HepG2 (cell line): ENCODE measurements at regions of chr3 and their contacts with region 1.

Region 1: DNA sequence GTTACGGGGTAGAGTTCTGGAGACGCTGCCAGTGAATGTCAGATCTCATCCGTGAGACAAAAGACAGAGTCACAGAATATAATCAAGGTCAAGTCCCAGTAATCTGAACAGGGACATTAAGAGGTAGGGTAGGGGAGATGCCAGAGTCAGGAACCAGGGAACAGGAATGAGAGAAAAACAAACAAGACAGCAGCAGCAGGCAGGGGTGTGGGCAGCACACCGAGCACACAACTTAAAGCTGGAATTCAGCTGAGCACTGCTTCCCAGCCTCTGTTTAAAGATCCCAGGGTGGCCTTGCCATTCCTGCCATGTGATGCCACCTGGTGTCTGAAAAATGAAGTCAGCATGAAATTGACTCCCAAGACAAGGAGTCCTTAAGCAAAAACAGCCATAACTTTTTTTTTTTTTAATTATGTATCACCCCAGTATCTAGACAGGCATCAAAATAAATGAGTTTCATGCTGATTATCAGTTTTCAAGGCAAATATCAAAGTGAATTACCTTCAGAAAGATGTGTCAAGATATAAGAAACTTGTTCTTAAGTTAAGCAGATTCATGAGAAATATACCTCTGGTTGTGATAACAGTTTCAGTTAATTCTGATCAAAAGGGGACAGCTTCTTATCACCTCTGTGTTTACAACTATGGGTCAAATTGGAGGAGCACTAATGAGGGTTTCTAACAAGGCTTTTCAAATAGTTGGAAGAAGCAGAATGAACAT is 203.7 kb downstream of the SLC9A9 start:
- DNase-seq: peak; percentile 22
- ATAC-seq: peak; percentile 76
- H3K4me3 ChIP-seq: no peak overlapping the region
- H3K27ac ChIP-seq: no peak overlapping the region
- H3K4me1 ChIP-seq: no peaks in the 10 kb centered on the region
- H3K27me3 ChIP-seq: no peaks in the 10 kb centered on the region; a peak in 1 of 5 replicates
- CTCF ChIP-seq: peak; percentile 52
- EP300 ChIP-seq: no peak
- POLR2A ChIP-seq: no peak
- RAD21 ChIP-seq: no peak

Region 2: DNA sequence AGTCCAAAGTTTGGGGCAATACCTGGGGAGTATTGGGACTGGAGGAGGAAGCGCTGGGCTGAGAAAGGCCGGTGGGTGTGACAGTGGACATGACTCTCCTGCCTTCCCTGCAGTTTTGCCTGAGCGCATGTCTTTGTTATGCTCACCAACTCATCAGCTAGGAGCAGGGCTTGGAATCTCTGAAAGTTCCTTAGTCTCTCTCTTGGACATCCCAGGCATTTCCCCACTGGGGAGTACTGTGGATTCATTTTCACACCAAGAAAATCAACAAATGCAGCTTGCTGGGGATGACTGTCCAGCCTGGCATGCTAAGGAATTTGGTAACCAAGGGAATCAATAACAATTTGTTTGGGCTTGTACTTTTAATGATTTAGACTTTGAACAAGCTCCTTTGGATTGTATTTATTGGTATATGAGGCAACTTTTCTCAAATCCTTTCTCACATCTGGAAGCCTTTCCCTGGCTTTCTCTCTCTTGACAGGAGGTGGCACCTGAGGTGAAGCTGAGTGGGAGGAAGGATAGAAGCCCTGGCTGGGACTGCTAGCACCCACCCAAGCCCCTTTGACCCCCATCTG is 573.5 kb before region 1 on chr3:
- CTCF ChIA-PET with region 1: no interaction called
- POLR2A ChIA-PET with region 1: no interaction called
- in situ Hi-C with region 1: no loop called
- intact Hi-C with region 1: loop called (anchors 10 kb)
- DNase-seq: peak; percentile 24
- ATAC-seq: peak; percentile 66
- H3K4me3 ChIP-seq: no peak overlapping the region
- H3K27ac ChIP-seq: no peak overlapping the region
- H3K4me1 ChIP-seq: peaks cover 10% of the 10 kb centered on the region
- H3K27me3 ChIP-seq: no peaks in the 10 kb centered on the region; a peak in 2 of 5 replicates
- CTCF ChIP-seq: no peak
- EP300 ChIP-seq: no peak
- POLR2A ChIP-seq: no peak
- RAD21 ChIP-seq: no peak

Region 3: DNA sequence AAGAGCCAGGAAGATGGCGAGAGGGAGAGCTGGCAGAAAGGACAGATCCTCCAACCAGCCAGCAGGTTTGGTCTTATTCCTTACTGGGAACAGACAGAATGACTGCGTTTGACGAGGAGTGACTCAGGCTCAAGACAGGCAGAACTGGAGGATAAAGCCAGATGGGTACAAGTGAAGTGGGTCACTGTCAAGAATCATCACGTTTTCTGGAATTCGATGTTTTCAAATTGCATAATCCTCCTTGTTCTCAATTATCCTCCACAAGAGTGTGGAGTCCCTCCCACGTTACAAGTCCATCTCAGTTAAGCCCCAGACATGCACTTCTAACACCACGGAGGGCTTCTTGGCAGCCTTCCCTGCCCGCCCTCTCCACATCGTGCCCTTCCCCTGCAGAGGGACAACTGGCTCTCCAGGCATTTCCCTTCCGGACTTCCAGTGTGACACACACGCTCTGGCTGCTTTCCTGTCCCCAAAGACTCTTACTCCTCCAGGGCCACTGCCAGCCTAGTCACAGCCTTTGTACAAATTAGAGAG is 341.8 kb before region 1 on chr3:
- CTCF ChIA-PET with region 1: no interaction called
- POLR2A ChIA-PET with region 1: no interaction called
- in situ Hi-C with region 1: no loop called
- intact Hi-C with region 1: no loop called
- DNase-seq: no peak
- ATAC-seq: no peak
- H3K4me3 ChIP-seq: no peak overlapping the region
- H3K27ac ChIP-seq: no peak overlapping the region
- H3K4me1 ChIP-seq: no peaks in the 10 kb centered on the region
- H3K27me3 ChIP-seq: peaks cover 0 to 6% of the 10 kb centered on the region in 2 experiments; a peak in 1 of 5 replicates
- CTCF ChIP-seq: no peak
- EP300 ChIP-seq: no peak
- POLR2A ChIP-seq: no peak
- RAD21 ChIP-seq: no peak

Region 4: GRCh38 chr3:143433787-143434378 is 210.6 kb before region 1 on chr3:
- CTCF ChIA-PET with region 1: no interaction called
- POLR2A ChIA-PET with region 1: no interaction called
- in situ Hi-C with region 1: no loop called
- intact Hi-C with region 1: loop called (anchors 1 kb)
- DNase-seq: peak; percentile 4
- ATAC-seq: no peak
- H3K4me3 ChIP-seq: no peak overlapping the region
- H3K27ac ChIP-seq: no peak overlapping the region
- H3K4me1 ChIP-seq: no peaks in the 10 kb centered on the region
- H3K27me3 ChIP-seq: no peaks in the 10 kb centered on the region
- CTCF ChIP-seq: peak; percentile 41
- EP300 ChIP-seq: no peak
- POLR2A ChIP-seq: no peak
- RAD21 ChIP-seq: no peak